ENCODE measurements at regions of chr2 and their contacts with region 1.

Region 1: GRCh38 chr2:119476301-119477021 is 44.8 kb downstream of the TMEM37 start:
- DNase-seq: peak; percentile 51
- ATAC-seq: peak; percentile 68
- H3K4me3 Mint-ChIP-seq: no peak overlapping the region
- H3K27ac Mint-ChIP-seq: no peak overlapping the region
- H3K4me1 Mint-ChIP-seq: no peaks in the 10 kb centered on the region
- H3K27me3 Mint-ChIP-seq: no peaks in the 10 kb centered on the region

Region 2: DNA sequence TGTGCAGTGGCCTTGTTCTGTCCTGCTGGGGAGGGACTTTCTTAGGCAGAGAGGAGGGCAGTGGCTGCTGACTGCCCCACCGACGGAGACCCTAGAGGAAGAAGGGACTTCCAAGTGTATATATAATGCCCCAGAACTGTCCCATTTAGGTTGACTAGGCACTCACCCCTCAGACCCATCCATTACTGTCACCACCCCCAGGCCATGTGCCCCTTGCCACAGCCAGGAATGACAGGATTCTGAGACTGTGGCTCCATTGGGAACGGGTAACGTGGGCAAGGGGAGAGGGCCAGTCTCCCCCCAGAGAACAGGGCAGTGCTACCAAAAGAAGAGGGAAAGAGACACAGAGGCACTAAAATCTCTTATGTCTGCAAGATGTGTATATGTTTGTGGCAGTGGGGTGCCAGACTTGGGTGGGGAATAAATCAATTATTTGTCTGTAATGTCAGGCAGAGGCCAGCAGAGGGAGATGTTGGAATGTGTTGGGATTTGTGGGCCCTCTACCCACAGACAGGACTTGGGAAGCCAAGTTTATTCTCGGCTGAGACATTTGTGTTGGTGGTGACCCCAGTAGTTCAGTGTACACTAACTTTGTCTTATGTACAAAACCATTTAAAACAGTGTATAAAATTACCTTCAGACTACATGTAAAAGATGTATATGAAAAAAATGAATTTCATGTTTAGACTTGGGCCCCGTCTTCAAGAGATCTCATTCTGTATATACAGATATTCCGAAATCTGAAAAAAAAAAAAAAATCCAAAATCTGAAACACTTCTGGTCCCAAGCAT is 68.8 kb before region 1 on chr2:
- CTCF ChIA-PET with region 1: interaction called, 10 read pairs
- DNase-seq: peak; percentile 44
- ATAC-seq: no peak
- H3K4me3 Mint-ChIP-seq: no peak overlapping the region
- H3K27ac Mint-ChIP-seq: no peak overlapping the region
- H3K4me1 Mint-ChIP-seq: no peaks in the 10 kb centered on the region
- H3K27me3 Mint-ChIP-seq: peaks cover 10% of the 10 kb centered on the region

Region 3: GRCh38 chr2:119487434-119488244 is 11.2 kb after region 1 on chr2:
- CTCF ChIA-PET with region 1: interaction called, 13 read pairs
- DNase-seq: no peak
- ATAC-seq: no peak
- H3K4me3 Mint-ChIP-seq: no peak overlapping the region
- H3K27ac Mint-ChIP-seq: no peak overlapping the region
- H3K4me1 Mint-ChIP-seq: no peaks in the 10 kb centered on the region
- H3K27me3 Mint-ChIP-seq: no peaks in the 10 kb centered on the region

Region 4: GRCh38 chr2:119759451-119760236 is 283.2 kb after region 1 on chr2 and contains the start of gene PTPN4:
- CTCF ChIA-PET with region 1: no interaction called
- DNase-seq: peak; percentile 99
- ATAC-seq: peak; percentile 95
- H3K4me3 Mint-ChIP-seq: peak within 1 kb of the TSS; percentile 91
- H3K27ac Mint-ChIP-seq: peak within 1 kb of the TSS; percentile 94
- H3K4me1 Mint-ChIP-seq: peaks cover 41% of the 10 kb centered on the region
- H3K27me3 Mint-ChIP-seq: no peaks in the 10 kb centered on the region
- total RNA-seq, gene PTPN4: 76.4 to 92.2 TPM